AG04449 (cell line): ENCODE measurements at regions of chr4 and their contacts with region 1.

Region 1: DNA sequence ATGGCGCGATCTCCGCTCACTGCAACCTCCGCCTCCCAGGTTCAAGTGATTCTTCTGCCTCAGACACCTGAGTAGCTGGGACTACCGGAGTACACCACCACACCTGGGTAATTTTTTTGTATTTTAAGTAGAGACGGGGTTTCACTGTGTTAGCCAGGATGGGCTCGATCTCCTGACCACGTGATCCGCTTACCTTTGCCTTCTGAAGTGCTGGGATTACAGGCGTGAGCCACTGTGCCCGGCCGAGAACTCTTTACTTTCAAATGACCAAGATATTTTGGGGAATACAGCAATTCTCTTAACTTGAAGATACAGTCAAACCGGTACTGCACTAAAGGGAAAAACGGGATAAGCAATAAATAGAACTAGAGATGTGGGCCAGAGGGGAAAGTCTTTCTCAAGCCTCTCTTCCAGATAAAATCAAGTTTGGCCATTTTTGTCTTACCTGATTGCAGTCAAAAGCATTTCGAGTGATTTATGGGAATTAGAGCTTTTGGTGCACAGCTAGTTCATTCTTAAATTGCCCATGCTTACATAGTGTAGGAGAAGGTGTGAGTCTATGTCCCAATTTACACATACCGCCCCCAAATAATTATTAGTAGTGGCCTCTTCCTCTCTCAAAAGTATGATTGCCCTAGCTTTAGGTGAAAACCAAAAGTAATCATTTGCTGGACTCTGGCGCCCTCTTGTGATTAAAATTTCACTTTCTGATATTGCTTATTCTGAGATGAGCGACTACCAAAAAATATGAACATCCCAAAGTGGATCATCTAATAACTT is 53.2 kb upstream of the ABCG2 start:
- DNase-seq: no peak
- H3K4me3 ChIP-seq: no peak overlapping the region
- CTCF ChIP-seq: peak; percentile 28

Region 2: DNA sequence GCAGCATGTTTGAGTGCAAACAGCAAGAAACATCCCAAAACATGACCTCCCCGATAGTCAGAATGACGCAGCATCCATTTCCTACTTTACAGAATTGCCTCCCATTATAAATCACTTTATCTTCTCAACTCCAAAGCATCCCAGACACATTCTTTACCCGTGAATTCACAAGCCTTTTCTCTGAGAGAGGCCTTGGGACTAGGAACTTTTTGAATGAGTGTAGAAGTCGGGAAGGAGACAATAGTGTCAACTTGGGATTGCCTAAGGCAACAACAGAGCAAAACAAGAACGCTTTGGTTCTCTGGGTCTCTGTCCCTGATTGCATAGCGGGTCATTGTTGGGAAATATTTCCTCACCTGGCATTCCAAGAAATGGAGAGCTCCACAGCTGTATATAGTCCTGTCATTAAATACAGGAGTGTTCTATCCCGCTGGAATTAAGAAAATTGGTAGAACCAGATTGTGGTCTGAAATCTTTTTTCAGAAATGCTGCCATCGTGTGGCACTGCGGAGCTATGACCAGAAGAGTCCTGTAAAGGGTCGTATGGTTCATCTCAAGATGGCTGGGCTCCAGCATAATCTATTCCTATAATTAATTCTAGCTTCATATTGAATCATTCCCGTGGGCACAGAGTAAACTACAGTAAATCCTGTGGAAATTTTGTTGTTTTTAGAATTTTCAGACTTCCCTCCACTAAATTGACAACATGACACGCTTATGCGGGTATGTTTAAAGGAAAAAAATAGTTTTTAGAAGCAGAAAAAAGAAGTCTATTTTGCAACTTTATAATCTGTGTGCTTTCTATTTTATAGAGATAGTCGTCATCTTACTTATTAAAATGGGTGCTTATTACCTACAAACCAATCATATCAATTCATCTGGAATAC is 238.1 kb before region 1 on chr4:
- CTCF ChIA-PET with region 1: interaction called, 12 read pairs
- POLR2A ChIA-PET with region 1: no interaction called
- DNase-seq: peak; percentile 82
- H3K4me3 ChIP-seq: peak overlapping the region; percentile 43
- CTCF ChIP-seq: peak; percentile 61

Region 3: DNA sequence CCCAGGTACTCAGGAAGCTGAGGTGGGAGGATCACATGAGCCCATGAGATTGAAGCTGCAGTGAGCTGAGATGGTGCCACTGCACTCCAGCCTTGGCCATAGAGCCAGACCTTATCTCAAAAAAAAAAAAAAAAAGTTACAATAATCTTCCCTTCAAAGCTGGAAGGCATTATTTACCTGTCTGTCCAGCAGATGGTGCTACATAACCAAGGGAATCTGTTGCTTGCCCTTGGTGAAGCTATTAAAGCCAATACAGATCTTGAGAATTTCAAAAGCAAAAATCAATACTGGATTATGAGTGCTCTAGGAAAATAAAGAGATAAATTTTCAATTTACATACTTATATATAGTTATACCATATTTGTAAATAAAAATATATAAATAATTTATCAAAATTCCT is 178.4 kb before region 1 on chr4:
- CTCF ChIA-PET with region 1: interaction called, 137 read pairs
- POLR2A ChIA-PET with region 1: no interaction called
- DNase-seq: no peak
- H3K4me3 ChIP-seq: no peak overlapping the region
- CTCF ChIP-seq: peak; percentile 51

Region 4: GRCh38 chr4:88054901-88055300 is 156.8 kb before region 1 on chr4:
- CTCF ChIA-PET with region 1: interaction called, 197 read pairs
- POLR2A ChIA-PET with region 1: no interaction called
- DNase-seq: no peak
- H3K4me3 ChIP-seq: no peak overlapping the region
- CTCF ChIP-seq: peak; percentile 59

Region 5: DNA sequence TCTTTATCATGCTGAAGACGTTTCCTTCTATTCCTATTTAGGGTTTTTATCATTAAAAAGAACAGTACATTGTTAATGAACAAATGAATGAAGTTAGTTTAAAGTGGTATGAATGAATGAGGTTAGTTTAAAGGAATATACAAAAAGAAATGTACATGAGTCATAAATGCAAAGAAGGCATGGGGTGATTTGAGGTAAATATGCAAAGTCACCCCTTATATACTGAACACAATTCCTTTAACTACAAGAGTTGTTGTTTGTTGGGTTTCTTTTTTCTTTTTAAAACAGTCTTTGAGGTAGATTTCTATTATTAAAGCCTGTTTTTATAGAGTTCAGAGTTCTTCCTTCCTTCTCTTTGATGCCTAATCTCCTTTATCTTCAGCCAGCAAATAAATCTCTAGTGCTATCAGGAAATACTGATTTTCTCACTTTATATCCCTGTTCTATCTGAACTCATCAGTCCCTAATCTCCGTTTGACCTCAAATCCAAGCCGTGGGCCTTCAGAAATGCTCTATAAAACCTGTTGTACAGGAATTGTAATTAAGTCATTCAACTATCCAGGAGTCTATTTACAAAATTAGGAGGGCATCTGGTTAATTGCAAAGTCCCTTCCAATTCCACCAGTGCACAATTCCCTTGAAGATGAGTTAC is 21.7 kb before region 1 on chr4:
- CTCF ChIA-PET with region 1: interaction called, 58 read pairs
- POLR2A ChIA-PET with region 1: no interaction called
- DNase-seq: no peak
- H3K4me3 ChIP-seq: no peak overlapping the region
- CTCF ChIP-seq: no peak

Region 6: GRCh38 chr4:88284439-88285234 is 73.0 kb after region 1 on chr4 and contains the start of gene PPM1K:
- CTCF ChIA-PET with region 1: no interaction called
- POLR2A ChIA-PET with region 1: no interaction called
- DNase-seq: peak; percentile 92
- H3K4me3 ChIP-seq: peak within 1 kb of the TSS; percentile 80
- CTCF ChIP-seq: peak; percentile 32

Region 7: DNA sequence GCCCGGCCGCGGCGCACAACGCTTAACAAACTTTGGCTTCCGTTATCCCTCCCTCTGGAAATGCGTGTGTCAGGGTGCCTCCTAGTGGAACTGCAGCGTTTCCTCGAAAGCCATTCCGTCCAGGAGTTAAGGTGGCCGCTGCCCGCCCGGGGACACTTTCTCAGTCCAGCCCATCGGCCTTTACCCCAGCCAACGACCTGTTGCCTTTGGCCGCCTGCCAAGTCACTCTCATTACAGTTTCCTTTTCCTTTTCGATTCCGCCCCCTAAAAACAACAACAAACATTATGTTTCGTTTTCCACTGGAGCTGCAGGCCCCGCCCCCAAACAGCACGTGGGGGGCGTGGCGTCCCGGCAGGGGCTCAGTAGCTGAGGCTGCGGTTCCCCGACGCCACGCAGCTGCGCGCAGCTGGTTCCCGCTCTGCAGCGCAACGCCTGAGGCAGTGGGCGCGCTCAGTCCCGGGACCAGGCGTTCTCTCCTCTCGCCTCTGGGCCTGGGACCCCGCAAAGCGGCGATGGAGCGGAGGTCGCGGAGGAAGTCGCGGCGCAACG is 245.2 kb after region 1 on chr4 and contains the start of gene HERC5:
- CTCF ChIA-PET with region 1: interaction called, 32 read pairs
- POLR2A ChIA-PET with region 1: no interaction called
- DNase-seq: peak; percentile 0
- H3K4me3 ChIP-seq: peak within 1 kb of the TSS; percentile 59
- CTCF ChIP-seq: peak; percentile 71

Region 8: DNA sequence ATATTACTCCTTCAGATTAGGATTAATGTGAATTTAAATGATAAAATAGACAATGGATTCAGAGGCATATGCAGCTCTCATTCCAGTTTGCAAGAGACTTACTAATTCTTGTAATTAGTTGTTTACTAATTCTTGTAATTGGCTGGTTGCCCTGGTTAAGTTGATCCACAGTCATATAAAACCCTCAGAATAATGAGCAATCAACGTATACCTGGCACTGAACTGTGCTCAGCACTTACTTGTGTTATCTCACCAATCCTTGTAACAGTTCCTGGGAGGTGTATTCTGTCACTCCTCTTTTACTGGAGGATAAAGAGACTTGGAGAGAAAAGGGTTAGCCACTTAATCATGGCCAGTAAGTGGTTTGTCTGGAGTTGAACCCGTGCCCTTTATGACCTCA is 255.7 kb after region 1 on chr4:
- CTCF ChIA-PET with region 1: no interaction called
- POLR2A ChIA-PET with region 1: no interaction called
- DNase-seq: no peak
- H3K4me3 ChIP-seq: no peak overlapping the region
- CTCF ChIP-seq: no peak